PC-9 (cell line): ENCODE measurements at regions of chr2 and their contacts with region 1.

Region 1: GRCh38 chr2:179082697-179083096 is 32.8 kb upstream of the CCDC141 start:
- DNase-seq: peak in 1 of 2 experiments; percentile 31
- H3K4me3 ChIP-seq: no peak overlapping the region
- H3K27ac ChIP-seq: no peak overlapping the region
- H3K4me1 ChIP-seq: no peaks in the 10 kb centered on the region
- H3K27me3 ChIP-seq: no peaks in the 10 kb centered on the region
- CTCF ChIP-seq: no peak

Region 2: GRCh38 chr2:178117725-178118124 is 965.0 kb before region 1 on chr2:
- CTCF ChIA-PET with region 1: no interaction called
- POLR2A ChIA-PET with region 1: interaction called, 11 read pairs
- intact Hi-C with region 1: no loop called
- DNase-seq: no peak
- H3K4me3 ChIP-seq: no peak overlapping the region
- H3K27ac ChIP-seq: no peak overlapping the region
- H3K4me1 ChIP-seq: peaks cover 10% of the 10 kb centered on the region
- H3K27me3 ChIP-seq: no peaks in the 10 kb centered on the region
- CTCF ChIP-seq: no peak

Region 3: GRCh38 chr2:179017773-179018357 is 64.8 kb before region 1 on chr2:
- CTCF ChIA-PET with region 1: no interaction called
- POLR2A ChIA-PET with region 1: no interaction called
- intact Hi-C with region 1: no loop called
- DNase-seq: no peak
- H3K4me3 ChIP-seq: no peak overlapping the region
- H3K27ac ChIP-seq: no peak overlapping the region
- H3K4me1 ChIP-seq: no peaks in the 10 kb centered on the region
- H3K27me3 ChIP-seq: no peaks in the 10 kb centered on the region
- CTCF ChIP-seq: no peak